ENCODE measurements at regions of chr20 and their contacts with region 1.

Region 1: GRCh38 chr20:11274141-11274594 is 600.4 kb upstream of the JAG1 start:
- DNase-seq: no peak
- H3K4me3 ChIP-seq: no peak overlapping the region
- H3K27ac ChIP-seq: no peak overlapping the region
- H3K4me1 ChIP-seq: no peaks in the 10 kb centered on the region
- H3K27me3 ChIP-seq: peaks cover 11% of the 10 kb centered on the region
- CTCF ChIP-seq: peak; percentile 83

Region 2: GRCh38 chr20:10558635-10559187 is 715.5 kb before region 1 on chr20:
- intact Hi-C with region 1: loop called (anchors 5 kb)
- DNase-seq: no peak
- H3K4me3 ChIP-seq: no peak overlapping the region
- H3K27ac ChIP-seq: peak overlapping the region; percentile 18
- H3K4me1 ChIP-seq: peaks cover 20% of the 10 kb centered on the region
- H3K27me3 ChIP-seq: no peaks in the 10 kb centered on the region
- CTCF ChIP-seq: peak; percentile 21

Region 3: DNA sequence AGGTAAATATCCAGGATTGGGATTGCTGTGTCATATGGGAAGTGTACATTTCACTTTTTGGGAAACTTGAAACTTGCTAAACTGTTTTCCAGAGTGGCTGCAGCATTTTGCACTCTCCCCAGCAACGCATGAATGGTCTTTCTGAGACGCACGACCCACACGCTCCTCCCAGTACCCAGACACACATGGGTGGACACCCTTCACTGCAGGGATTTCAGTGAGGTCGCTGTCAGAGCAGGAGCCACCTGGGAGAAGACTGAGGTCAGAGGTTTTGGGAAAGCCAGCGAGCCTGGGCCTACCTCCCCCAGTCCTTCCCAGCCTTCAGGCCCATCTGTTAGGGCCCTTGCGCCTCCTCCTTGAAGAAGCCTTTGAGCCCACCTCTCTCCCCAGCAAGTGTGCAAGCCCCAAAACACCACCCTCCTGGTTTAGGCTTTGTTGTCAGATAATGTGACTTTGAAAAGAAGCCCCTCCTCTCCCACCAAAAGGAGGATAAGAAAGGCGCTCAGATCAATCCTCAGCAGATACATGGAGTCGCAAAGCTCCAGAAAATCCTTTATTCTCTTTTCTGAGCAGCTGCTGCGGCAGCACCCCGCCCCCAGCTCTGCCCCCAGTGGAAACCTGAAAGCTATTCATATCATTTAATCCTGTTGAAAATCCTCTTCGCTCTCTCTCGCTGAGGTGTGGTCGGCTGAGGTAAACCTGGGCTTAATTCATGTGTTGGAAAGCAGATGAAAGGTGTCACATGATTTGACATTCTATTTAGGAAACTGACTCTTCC is 587.6 kb before region 1 on chr20:
- intact Hi-C with region 1: loop called (anchors 10 kb)
- DNase-seq: no peak
- H3K4me3 ChIP-seq: no peak overlapping the region
- H3K27ac ChIP-seq: no peak overlapping the region
- H3K4me1 ChIP-seq: no peaks in the 10 kb centered on the region
- H3K27me3 ChIP-seq: no peaks in the 10 kb centered on the region
- CTCF ChIP-seq: no peak

Region 4: DNA sequence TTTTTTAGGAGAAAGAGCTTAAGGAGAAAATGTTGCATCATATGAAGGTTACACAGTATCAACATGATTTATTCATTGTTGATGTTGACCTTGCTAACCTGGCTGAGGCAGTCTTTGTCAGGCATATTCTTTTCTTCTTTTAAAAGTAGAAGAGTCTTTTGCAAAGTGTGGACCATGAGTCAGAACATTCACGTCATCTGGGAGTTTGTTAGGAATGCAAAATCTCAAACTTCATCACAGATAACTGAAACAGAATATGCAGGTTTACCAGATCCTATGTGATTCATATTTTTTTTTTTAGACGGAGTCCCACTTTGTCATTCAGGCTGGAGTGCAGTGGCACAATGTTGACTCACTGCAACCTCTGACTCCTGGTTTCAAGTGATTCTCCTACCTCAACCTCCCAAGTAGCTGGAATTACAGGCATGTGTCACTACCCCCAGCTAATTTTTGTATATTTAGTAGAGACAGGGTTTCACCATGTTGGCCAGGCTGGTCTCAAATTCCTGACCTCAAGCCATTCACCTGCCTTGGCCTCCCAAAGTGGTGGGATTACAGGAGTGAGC is 113.1 kb after region 1 on chr20:
- intact Hi-C with region 1: no loop called
- DNase-seq: no peak
- H3K4me3 ChIP-seq: no peak overlapping the region
- H3K27ac ChIP-seq: no peak overlapping the region
- H3K4me1 ChIP-seq: no peaks in the 10 kb centered on the region
- H3K27me3 ChIP-seq: no peaks in the 10 kb centered on the region
- CTCF ChIP-seq: no peak

Measured in left ventricle myocardium inferior (tissue), 1 donor.